ENCODE measurements at regions of chr6 and their contacts with region 1.

Region 1: GRCh38 chr6:86937219-86938079 is at the start of gene HTR1E:
- DNase-seq: peak; percentile 42
- ATAC-seq: peak; percentile 98
- H3K4me3 ChIP-seq: peak within 1 kb of the TSS; percentile 14 to 67 (median 45); a peak in 5 of 6 replicates
- H3K27ac ChIP-seq: no peak within 1 kb of the TSS
- H3K4me1 ChIP-seq: peaks cover 21% of the 10 kb centered on the region
- H3K27me3 ChIP-seq: no peaks in the 10 kb centered on the region
- CTCF ChIP-seq: peak; percentile 87
- EP300 ChIP-seq: no peak
- POLR2A ChIP-seq: no peak
- RAD21 ChIP-seq: 0 out of 2 replicates have a peak, but pooled peaks have one; percentile 41
- total RNA-seq, gene HTR1E: not detected in 2 replicates

Region 2: GRCh38 chr6:85756982-85757381 is 1180.5 kb before region 1 on chr6:
- CTCF ChIA-PET with region 1: no interaction called
- POLR2A ChIA-PET with region 1: no interaction called
- in situ Hi-C with region 1: no loop called
- intact Hi-C with region 1: loop called (anchors 10 kb)
- DNase-seq: no peak
- ATAC-seq: no peak
- H3K4me3 ChIP-seq: no peak overlapping the region
- H3K27ac ChIP-seq: no peak overlapping the region
- H3K4me1 ChIP-seq: peaks cover 8% of the 10 kb centered on the region; the same call in 1 of the 2 replicates
- H3K27me3 ChIP-seq: peaks cover 0 to under 1% of the 10 kb centered on the region in 2 experiments; a peak in 2 of 5 replicates
- CTCF ChIP-seq: peak; percentile 26
- EP300 ChIP-seq: no peak
- POLR2A ChIP-seq: no peak
- RAD21 ChIP-seq: no peak

Region 3: GRCh38 chr6:86856937-86857563 is 80.4 kb before region 1 on chr6:
- CTCF ChIA-PET with region 1: no interaction called
- POLR2A ChIA-PET with region 1: no interaction called
- in situ Hi-C with region 1: no loop called
- intact Hi-C with region 1: loop called (anchors 5 kb)
- DNase-seq: peak; percentile 33
- ATAC-seq: peak; percentile 39; the same call in 1 of the 3 replicates
- H3K4me3 ChIP-seq: no peak overlapping the region
- H3K27ac ChIP-seq: no peak overlapping the region
- H3K4me1 ChIP-seq: no peaks in the 10 kb centered on the region
- H3K27me3 ChIP-seq: no peaks in the 10 kb centered on the region
- CTCF ChIP-seq: peak; percentile 66
- EP300 ChIP-seq: no peak
- POLR2A ChIP-seq: no peak
- RAD21 ChIP-seq: no peak

Region 4: DNA sequence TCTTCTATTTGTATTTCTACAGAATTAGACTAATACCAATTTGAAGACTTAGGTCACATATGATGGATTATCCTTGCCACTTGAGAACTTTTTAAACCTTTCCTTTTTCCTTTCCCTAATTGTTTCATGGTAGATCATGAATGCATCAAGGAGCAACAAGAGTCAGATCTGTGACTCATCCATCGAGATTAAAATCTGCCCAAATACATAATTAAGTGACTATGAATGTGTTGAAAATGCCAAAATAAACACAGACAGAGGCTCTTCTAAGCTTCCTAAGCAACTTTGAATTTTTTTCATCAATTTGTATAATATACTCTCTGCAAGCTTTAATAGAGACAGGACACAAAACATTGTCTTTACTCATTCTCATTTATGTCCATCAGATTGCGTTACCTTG is 23.7 kb before region 1 on chr6:
- CTCF ChIA-PET with region 1: no interaction called
- POLR2A ChIA-PET with region 1: no interaction called
- in situ Hi-C with region 1: no loop called
- intact Hi-C with region 1: no loop called
- DNase-seq: no peak
- ATAC-seq: no peak
- H3K4me3 ChIP-seq: no peak overlapping the region
- H3K27ac ChIP-seq: no peak overlapping the region
- H3K4me1 ChIP-seq: no peaks in the 10 kb centered on the region
- H3K27me3 ChIP-seq: no peaks in the 10 kb centered on the region
- CTCF ChIP-seq: no peak
- EP300 ChIP-seq: no peak
- POLR2A ChIP-seq: no peak
- RAD21 ChIP-seq: no peak